HCT116 (cell line): ENCODE measurements at regions of chr20 and their contacts with region 1.

Region 1: DNA sequence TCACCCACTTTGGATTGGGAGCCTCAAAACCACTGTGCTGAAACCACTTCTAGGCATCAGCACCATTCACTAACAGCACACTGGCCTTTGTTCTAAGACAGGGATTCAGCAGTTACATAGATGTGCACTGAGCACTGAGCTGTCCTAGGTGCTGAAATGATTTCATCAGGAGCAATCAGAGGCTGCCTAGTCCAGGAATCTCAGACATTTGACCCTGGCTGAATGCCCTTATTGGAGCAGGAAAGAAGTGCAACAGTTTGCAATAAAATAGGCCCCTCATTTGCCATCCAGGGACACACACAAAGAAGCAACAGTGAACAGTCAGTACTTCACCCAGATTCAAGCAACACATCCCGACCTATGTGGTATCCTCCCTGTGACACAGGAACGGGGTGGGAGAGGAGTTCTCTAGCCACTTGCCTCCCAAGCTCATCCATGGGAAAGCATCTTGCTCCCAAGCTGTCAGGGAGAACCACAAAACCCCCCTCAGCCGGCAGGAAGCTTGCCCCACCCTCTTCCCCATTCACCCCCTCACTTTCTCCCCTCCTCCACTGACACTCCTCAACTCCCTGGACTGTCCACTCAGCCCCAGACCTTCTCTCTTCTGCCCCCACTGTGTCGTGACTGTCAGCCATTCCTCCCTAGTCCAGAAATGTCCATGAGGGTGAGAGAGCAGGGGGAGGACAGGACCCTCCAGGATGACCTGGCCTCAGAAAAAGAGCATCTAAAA is 304.4 kb downstream of the PREX1 start:
- DNase-seq: peak; percentile 10
- ATAC-seq: peak; percentile 58; the same call in 1 of the 2 replicates
- H3K4me3 ChIP-seq: no peak overlapping the region
- H3K27ac ChIP-seq: no peak overlapping the region
- H3K4me1 ChIP-seq: no peaks in the 10 kb centered on the region
- H3K27me3 ChIP-seq: peaks cover 40% of the 10 kb centered on the region
- CTCF ChIP-seq: no peak
- POLR2A ChIP-seq: no peak
- RAD21 ChIP-seq: no peak

Region 2: GRCh38 chr20:48478025-48478769 is 45.2 kb before region 1 on chr20:
- CTCF ChIA-PET with region 1: no interaction called
- POLR2A ChIA-PET with region 1: no interaction called
- RAD21 ChIA-PET with region 1: no interaction called
- intact Hi-C with region 1: loop called (anchors 10 kb)
- DNase-seq: no peak
- ATAC-seq: no peak
- H3K4me3 ChIP-seq: no peak overlapping the region
- H3K27ac ChIP-seq: no peak overlapping the region
- H3K4me1 ChIP-seq: no peaks in the 10 kb centered on the region
- H3K27me3 ChIP-seq: peaks cover 92% of the 10 kb centered on the region
- CTCF ChIP-seq: no peak
- POLR2A ChIP-seq: no peak
- RAD21 ChIP-seq: no peak

Region 3: DNA sequence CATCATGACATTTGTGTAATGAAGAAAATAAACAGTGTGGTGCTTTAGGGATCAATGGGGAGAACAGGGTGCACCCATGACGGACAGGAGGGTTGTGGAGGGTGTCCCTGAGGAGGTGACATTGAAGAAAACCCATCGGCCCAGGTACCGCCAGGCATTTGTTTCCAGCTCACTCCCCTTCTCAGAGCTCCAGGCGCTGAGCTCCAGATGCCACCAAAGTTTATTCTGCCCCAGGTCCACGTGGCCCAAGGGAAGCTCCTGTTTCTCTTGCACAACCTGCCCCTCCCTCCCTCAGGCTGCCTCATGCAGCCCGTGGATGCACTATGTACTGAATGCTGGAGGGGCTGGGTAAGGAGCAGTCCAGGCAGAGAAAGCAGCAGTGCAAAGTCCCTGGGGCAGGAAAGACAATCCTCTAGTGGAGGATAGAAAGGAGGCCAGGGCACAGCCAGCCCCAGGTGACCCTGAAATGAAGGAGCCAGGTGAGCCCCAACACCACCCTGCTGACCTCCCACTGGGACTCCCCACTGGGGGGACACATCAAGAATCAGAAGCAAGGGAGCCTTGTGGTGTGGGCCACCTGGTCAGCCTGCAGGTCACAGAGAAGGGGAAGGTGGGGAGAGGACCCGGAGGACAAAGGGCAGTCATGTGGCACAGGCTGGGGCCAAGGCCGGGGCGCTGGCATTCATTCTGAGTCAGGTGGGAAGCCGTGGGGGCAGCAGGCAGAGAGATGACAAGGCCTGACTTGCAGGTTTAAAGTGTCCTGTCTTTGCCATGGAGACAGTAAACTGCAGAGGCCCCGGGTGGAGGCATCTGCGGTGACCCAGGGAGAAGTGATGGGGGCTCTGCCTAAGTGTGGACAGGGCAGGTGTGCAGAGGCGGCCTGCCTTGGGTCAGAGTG is 74.3 kb after region 1 on chr20:
- CTCF ChIA-PET with region 1: no interaction called
- POLR2A ChIA-PET with region 1: no interaction called
- RAD21 ChIA-PET with region 1: no interaction called
- intact Hi-C with region 1: no loop called
- DNase-seq: no peak
- ATAC-seq: no peak
- H3K4me3 ChIP-seq: no peak overlapping the region
- H3K27ac ChIP-seq: no peak overlapping the region
- H3K4me1 ChIP-seq: no peaks in the 10 kb centered on the region; a peak in 1 of 4 replicates
- H3K27me3 ChIP-seq: peaks cover 2% of the 10 kb centered on the region; the same call in 1 of the 2 replicates
- CTCF ChIP-seq: no peak
- POLR2A ChIP-seq: no peak
- RAD21 ChIP-seq: no peak

Region 4: GRCh38 chr20:48797275-48797825 is 274.0 kb after region 1 on chr20:
- CTCF ChIA-PET with region 1: no interaction called
- POLR2A ChIA-PET with region 1: no interaction called
- RAD21 ChIA-PET with region 1: no interaction called
- intact Hi-C with region 1: no loop called
- DNase-seq: no peak
- ATAC-seq: no peak
- H3K4me3 ChIP-seq: no peak overlapping the region
- H3K27ac ChIP-seq: no peak overlapping the region
- H3K4me1 ChIP-seq: no peaks in the 10 kb centered on the region
- H3K27me3 ChIP-seq: 0 out of 2 replicates have a peak, but pooled peaks cover 3% of the 10 kb centered on the region
- CTCF ChIP-seq: no peak
- POLR2A ChIP-seq: no peak
- RAD21 ChIP-seq: no peak